ENCODE measurements at regions of chr17 and their contacts with region 1.

Region 1: DNA sequence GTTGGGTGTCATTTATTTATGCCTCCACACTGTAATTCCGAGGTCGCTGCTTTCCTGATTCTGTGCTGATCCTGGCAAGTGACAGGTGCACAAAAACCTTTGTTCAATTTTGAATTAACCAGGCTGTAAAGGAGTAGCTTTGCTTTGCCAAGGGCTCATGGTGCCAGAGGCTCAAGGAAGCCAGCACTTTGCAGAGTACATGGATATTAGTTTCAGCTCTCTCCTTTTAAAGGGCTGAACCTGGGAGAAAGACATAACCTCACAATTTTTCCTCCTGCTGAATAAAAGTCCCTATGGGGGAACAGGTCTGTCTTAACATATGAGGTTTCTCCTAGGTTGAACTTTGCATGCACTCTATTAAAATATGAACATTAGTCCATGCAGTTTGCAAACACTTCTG is 227.6 kb upstream of the WSB1 start:
- DNase-seq: no peak
- ATAC-seq: no peak

Region 2: GRCh38 chr17:27079660-27080059 is 13.3 kb after region 1 on chr17:
- intact Hi-C with region 1: loop called (anchors 1 kb)
- DNase-seq: no peak
- ATAC-seq: no peak

Region 3: DNA sequence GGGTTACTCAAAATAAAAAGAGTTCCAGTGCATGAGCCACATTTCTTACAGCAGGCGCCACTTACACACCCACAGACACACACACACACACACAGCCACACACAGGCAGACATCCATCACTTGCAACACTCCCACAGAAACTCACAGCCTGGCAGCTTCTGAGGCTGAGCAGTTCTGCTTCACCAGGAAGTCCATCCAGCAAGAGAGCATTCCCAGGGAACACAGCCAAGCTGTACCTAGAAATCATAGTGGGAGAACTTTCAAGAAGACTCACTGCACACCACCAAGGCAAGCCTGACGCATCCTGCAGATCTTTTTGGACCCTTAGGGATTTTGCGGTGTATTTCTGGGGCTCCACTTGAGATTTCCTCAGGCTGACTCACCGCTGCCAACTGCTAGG is 86.7 kb after region 1 on chr17:
- intact Hi-C with region 1: no loop called
- DNase-seq: no peak
- ATAC-seq: no peak

Region 4: DNA sequence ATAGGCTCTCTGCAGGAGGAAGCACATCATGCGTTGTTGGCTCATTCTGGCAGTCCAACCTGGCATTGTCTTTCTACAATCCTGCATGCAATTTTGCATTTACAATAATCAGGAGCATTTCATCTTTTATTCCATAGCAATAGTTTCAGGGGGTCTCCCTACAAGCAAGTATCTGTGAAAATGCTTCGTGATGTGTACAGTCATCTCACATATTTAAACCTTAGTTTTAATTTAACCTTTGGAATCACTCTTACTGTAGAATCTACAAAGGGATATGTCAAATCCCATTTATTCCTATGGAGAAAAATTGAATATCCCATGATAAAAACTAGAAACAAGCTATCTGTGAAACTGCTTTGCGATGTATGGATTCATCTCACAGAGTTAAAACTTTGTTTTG is 115.6 kb after region 1 on chr17:
- intact Hi-C with region 1: no loop called
- DNase-seq: no peak
- ATAC-seq: no peak

Region 5: DNA sequence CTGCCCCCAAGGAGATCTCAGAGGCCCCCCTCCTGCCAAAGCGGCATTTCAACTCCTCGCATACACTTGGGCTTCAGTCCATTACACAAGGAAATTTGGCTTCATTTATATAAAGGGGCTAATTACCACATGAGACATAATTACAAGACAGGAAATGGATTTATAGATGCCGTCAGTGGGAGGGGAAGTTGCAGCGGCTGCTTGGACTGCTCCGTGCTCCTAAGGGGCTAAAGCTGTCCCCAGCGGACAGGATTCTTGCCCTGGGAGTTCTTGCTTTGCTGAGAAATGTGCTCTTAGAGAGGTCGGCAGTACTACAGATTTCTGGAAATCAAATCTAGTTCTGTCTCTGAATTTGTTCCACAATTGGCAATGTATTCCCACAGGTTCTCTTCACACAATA is 919.0 kb after region 1 on chr17:
- intact Hi-C with region 1: no loop called
- DNase-seq: no peak
- ATAC-seq: no peak

Region 6: DNA sequence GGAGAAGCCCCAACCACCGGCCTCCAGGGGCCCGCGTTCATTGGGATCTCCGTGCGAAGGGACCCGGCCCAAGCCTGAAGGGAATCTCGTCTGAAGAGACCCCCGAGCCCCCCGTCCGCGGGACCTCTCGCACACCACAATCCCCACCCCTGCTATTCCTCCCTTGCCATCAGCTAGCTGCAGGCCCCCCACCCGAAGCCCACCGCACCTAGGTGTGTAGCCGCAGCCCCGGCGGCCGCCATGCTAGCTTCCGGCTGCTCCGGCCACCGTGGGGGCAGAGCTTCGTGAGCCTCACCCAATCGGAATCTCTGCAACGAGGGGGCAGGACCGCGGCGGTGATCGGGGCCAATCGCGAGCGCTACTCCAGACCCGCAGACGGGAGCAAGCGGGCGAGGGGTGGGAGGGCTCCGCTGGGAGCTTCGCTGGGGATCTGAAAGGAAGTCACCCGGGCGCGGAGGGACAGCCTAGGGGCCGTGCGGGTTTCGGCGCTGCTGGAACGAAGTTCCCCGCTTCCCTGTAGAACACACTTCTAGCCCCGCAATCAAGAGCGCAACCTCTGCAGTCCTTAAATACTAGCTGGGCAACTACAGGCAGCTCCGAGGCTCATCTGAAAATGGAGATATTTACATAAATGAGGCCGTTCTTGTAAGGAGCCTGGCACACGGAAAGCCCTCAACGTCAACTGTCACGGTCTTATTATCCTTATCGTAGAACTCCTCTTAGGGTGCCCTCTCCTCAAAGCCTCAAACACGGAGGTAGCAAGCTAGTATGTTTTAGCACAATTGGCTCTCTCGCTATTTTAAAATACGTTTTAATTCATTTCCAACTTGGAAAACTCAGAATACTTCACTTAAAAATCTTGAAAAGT is 1505.2 kb after region 1 on chr17 and contains the start of gene PIGS:
- intact Hi-C with region 1: no loop called
- DNase-seq: peak; percentile 96
- ATAC-seq: peak; percentile 99
- total RNA-seq, gene PIGS: 40.4 TPM

Measured in sciatic nerve (tissue), 2 donors.